Activated B cell treated with CpG ODN at 0.5 μM for 24 hours (primary cell): ENCODE measurements at regions of chr6 and their contacts with region 1.

Region 1: DNA sequence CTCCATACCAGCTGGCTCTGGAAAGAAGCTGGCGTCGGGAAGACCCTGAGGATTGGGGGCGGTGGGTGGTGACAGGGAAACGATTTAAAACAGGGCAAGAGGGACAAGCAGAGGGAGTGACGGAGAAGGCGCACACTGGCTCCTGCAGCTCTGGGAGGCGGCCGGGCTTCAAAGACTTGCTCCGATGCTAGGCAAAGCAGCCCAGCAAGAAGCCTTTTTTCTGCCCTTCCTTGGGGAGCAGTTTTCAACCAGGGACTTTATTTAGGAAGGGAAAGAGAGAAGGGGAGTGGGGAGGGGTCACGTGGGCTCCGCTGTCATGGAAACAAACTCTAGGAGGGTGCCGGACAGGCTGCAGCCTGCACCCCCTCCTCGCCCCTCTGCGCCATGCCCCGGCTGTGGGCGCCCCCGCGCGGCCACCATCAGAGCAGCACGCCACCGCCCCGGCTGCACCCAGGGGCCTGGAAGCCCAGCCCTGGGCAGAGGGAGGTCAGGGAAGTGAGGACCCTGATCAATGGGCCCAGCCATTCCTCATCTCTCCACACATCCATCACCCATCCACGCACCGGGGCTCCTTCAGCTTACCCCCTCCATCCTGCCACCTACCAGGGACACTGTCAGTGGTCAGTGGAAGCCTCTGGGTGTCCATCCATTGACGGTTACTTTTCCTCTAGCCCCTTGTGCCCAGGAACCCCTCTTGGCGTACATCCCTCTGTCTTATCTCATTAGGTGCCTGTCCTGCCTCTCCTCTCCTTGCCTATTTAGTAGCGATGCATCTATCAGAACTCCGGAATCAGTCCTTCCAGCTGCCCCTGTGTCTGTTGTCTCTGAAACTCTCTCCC is 66.6 kb upstream of the CCDC167 start:
- DNase-seq: peak; percentile 77
- ATAC-seq: peak; percentile 65
- H3K4me3 Mint-ChIP-seq: peak overlapping the region; percentile 60
- H3K27ac Mint-ChIP-seq: no peak overlapping the region
- H3K4me1 Mint-ChIP-seq: peaks cover 63% of the 10 kb centered on the region
- H3K27me3 Mint-ChIP-seq: no peaks in the 10 kb centered on the region
- CTCF ChIP-seq: no peak

Region 2: DNA sequence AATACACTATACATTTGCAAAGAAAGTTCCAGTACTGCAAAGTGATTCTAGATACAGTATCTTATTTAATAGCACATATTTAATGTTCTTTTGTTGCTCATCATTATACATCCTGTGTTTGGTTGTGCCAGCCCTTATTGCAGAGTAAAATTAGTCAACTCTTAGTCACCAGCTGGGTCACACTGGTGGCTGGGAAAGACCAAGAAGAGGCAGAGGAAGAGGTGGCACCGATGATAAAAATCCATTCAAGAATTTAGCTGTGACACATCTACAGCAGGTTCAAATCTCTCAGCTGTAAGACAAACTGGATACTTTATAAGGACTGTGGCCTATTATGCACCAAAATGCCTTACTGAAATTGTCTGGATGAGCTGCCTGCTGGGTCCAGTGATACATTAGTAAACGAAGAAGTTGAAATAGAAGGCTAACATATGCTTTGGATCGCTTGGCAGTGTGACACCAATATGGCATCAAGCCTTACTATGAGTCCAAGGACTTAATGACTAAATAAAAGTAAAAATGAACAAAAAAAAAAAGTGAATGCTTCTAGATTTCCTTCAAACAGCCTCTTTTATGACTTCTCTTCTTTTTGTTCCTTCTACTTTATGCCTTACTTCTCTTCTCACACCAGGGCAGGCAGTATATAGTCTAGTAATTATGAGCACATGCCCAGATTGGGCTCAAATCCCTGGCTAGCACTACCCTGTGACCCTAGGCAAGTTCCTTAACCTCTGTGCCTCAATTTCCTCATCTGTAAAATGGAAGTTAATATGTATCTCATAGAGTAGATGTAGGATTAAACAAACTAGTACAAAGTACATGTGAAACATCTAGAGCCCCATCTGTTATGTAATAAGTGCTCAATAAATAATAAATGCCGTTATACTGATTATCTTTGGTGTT is 241.9 kb before region 1 on chr6:
- CTCF ChIA-PET with region 1: interaction called, 11 read pairs
- POLR2A ChIA-PET with region 1: no interaction called
- intact Hi-C with region 1: loop called (anchors 1 kb)
- DNase-seq: no peak
- ATAC-seq: no peak
- H3K4me3 Mint-ChIP-seq: no peak overlapping the region
- H3K27ac Mint-ChIP-seq: no peak overlapping the region
- H3K4me1 Mint-ChIP-seq: peaks cover 2% of the 10 kb centered on the region
- H3K27me3 Mint-ChIP-seq: no peaks in the 10 kb centered on the region
- CTCF ChIP-seq: no peak

Region 3: DNA sequence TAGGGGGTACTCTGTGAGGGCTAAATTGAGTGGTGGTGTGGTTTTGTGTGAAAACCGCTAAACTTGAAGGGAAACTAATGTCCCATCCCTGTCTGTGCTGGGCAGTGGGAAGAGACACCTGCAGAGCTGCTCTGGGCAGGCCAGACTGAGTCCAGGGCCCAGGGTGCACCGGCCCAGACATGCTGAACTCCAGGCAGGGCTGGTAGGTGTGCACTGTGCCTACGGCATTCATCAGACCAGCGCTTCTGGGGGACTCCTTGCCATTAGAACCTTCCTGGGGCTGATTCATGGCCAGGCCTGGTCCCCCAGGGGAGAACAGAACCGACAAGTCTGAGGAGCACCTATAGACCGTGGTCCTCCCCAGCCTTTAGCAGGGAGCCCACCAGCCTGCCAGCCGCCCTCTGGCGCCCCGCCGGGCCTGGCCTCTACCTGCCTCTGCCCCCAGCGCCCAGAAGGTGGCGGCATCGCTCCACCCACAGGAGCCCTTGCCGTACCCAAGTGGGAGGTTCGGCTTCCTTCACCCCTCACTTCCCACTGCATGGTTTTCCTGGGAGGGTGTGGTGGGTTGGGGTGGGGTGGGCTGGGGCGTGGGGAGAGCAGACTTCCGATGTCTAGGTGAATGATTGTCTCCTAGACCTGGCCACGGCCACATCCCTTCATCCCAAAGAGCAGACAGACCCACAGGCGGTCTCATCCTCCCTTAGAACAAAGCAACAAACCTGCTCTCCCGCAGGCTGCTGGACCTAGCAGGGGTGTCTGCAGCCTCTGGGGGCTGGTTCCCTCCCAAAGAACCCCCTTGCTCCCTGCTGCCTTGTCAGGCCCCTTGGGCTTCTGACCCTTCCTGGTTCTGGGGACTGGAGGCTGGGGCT is 82.2 kb before region 1 on chr6:
- CTCF ChIA-PET with region 1: interaction called, 22 read pairs
- POLR2A ChIA-PET with region 1: no interaction called
- intact Hi-C with region 1: loop called (anchors 1 kb)
- DNase-seq: peak; percentile 72
- ATAC-seq: peak; percentile 97
- H3K4me3 Mint-ChIP-seq: no peak overlapping the region
- H3K27ac Mint-ChIP-seq: no peak overlapping the region
- H3K4me1 Mint-ChIP-seq: peaks cover 3% of the 10 kb centered on the region
- H3K27me3 Mint-ChIP-seq: no peaks in the 10 kb centered on the region
- CTCF ChIP-seq: no peak

Region 4: DNA sequence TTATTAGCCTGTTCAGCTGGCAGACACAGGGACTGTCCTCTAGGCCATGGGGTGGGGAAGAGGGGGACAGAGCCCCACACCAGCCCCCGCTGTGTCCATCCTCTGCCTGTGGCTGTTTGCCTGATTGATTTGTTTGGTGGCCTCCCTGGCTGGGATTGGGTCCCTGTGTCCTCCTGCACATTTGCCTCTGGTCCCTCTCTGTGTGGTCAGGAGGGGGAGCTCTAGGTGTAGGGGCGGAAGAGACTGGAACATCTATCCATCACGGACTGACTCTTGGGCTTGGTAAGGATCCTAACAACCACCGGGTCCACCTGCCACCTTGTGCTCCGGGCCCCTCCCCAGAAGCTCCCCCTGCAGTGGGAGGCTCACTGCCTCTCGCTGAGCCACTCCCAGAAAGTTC is 28.2 kb before region 1 on chr6:
- CTCF ChIA-PET with region 1: interaction called, 158 read pairs
- POLR2A ChIA-PET with region 1: interaction called, 16 read pairs
- intact Hi-C with region 1: loop called (anchors 1 kb)
- DNase-seq: no peak
- ATAC-seq: peak; percentile 27
- H3K4me3 Mint-ChIP-seq: no peak overlapping the region
- H3K27ac Mint-ChIP-seq: peak overlapping the region; percentile 26
- H3K4me1 Mint-ChIP-seq: peaks cover 16% of the 10 kb centered on the region
- H3K27me3 Mint-ChIP-seq: peaks cover 20% of the 10 kb centered on the region
- CTCF ChIP-seq: no peak

Region 5: GRCh38 chr6:37554480-37554819 is 11.9 kb before region 1 on chr6:
- CTCF ChIA-PET with region 1: interaction called, 12 read pairs
- POLR2A ChIA-PET with region 1: interaction called, 33 read pairs
- intact Hi-C with region 1: loop called (anchors 1 kb)
- DNase-seq: no peak
- ATAC-seq: peak; percentile 19
- H3K4me3 Mint-ChIP-seq: peak overlapping the region; percentile 61
- H3K27ac Mint-ChIP-seq: peak overlapping the region; percentile 79
- H3K4me1 Mint-ChIP-seq: peaks cover 81% of the 10 kb centered on the region
- H3K27me3 Mint-ChIP-seq: no peaks in the 10 kb centered on the region
- CTCF ChIP-seq: no peak

Region 6: DNA sequence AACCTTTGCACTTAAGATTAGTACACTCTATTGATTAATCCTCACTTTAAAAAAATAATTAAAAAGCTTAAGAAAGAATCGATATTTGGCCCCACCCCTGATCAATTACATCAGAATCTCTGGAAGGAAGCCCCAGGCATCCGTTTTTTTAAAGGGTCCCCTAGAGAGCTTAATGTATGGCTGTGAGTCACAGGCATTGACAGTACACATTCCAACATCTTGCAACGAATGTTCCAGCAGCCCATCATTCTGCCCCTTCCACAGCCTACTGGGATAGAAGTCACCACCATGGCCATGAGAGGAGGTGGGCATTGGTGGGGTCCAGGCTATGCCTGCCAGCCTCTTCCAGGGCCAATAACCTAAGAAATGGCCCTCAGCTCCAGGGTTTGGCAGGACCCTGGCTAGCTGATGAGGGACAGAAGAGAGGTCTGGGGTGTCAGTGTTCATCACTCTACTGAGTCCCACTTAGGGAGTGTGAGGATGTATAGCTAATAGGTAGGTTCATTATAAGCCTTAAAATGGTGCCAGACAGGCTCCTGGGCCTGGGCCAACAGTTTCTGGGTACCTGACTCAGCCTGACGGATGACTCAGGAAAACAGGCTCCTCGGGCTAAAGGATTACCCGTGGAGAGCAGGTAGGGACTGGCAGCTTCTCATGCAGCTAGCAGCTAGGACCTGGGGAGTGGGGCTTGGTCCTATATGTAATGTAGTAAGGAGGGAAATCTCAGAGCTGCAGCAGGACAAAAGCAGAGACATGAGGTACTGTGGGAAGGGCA is 91.0 kb after region 1 on chr6:
- CTCF ChIA-PET with region 1: no interaction called
- POLR2A ChIA-PET with region 1: no interaction called
- intact Hi-C with region 1: no loop called
- DNase-seq: no peak
- ATAC-seq: no peak
- H3K4me3 Mint-ChIP-seq: no peak overlapping the region
- H3K27ac Mint-ChIP-seq: no peak overlapping the region
- H3K4me1 Mint-ChIP-seq: no peaks in the 10 kb centered on the region
- H3K27me3 Mint-ChIP-seq: no peaks in the 10 kb centered on the region
- CTCF ChIP-seq: no peak